Posterior cingulate gyrus (tissue), 11 donors: ENCODE measurements at regions of chr4 and their contacts with region 1.

Region 1: GRCh38 chr4:1794809-1795303 is 1.8 kb downstream of the FGFR3 start:
- DNase-seq: no peak

Region 2: DNA sequence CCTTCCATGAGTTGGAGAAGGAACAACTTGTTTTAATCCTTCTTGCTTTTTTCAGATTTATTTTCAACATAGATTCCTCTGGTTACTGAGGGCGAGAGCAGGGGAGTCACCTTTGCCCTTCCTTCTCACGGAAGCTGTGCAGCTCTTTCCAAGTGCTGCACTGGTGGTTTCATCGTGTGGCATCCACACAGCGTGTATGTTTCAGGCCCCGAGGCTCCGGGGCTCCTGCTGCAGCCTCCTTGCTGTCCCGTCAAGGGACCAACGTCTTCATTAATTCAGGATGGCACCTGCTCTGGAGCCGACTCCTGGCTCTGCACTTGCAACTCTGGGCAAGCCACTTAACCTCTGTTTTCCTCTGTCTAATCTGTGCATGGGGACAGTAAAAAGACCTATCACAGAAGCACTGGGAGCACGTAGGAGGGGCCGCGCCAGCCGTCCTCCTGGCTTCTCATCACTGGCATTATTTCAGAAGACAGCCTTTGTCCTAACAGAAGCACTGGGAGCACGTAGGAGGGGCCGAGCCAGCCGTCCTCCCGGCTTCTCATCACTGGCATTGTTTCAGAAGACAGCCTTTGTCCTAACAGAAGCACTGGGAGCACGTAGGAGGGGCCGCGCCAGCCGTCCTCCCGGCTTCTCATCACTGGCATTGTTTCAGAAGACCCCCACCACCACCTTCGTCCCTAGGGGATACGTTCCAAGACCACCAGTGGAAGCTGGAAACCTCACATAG is 270.8 kb before region 1 on chr4:
- intact Hi-C with region 1: no loop called
- DNase-seq: peak in 7 of 10 donors; percentile 16 to 95 (median 41)

Region 3: GRCh38 chr4:1763550-1764080 is 31.2 kb before region 1 on chr4:
- intact Hi-C with region 1: loop called (anchors 5 kb)
- DNase-seq: peak in 2 of 10 donors; percentile 29 to 58

Region 4: GRCh38 chr4:2045518-2045951 is 250.7 kb after region 1 on chr4:
- intact Hi-C with region 1: no loop called
- DNase-seq: peak in 3 of 10 donors; percentile 73 to 86 (median 80)